Naive thymus-derived CD4-positive, alpha-beta T cell (primary cell): ENCODE measurements at regions of chr3 and their contacts with region 1.

Region 1: GRCh38 chr3:18444595-18445400 is 19.7 kb upstream of the SATB1 start:
- DNase-seq: peak; percentile 80 to 91 (median 87)
- ATAC-seq: peak; percentile 80
- H3K4me3 ChIP-seq: peak overlapping the region; percentile 99
- H3K4me3 Mint-ChIP-seq: peak overlapping the region; percentile 92 to 100 (median 96)
- H3K27ac ChIP-seq: peak overlapping the region; percentile 97
- H3K27ac Mint-ChIP-seq: peak overlapping the region; percentile 94 to 99 (median 98)
- H3K4me1 ChIP-seq: peaks cover 11 to 19% of the 10 kb centered on the region in 2 donors
- H3K4me1 Mint-ChIP-seq: peaks cover 19 to 52% (median 39%) of the 10 kb centered on the region in 7 donors
- H3K27me3 ChIP-seq: no peaks in the 10 kb centered on the region
- H3K27me3 Mint-ChIP-seq: no peaks in the 10 kb centered on the region

Region 2: GRCh38 chr3:17742108-17742879 is 702.5 kb before region 1 on chr3 and contains the start of gene TBC1D5:
- CTCF ChIA-PET with region 1: no interaction called
- POLR2A ChIA-PET with region 1: no interaction called
- intact Hi-C with region 1: loop called in 1 of 2 experiments (anchors 1 kb)
- DNase-seq: peak; percentile 77 to 91 (median 84)
- ATAC-seq: peak; percentile 95
- H3K4me3 ChIP-seq: peak within 1 kb of the TSS; percentile 72
- H3K4me3 Mint-ChIP-seq: peak within 1 kb of the TSS; percentile 79 to 96 (median 92)
- H3K27ac ChIP-seq: peak within 1 kb of the TSS; percentile 71
- H3K27ac Mint-ChIP-seq: peak within 1 kb of the TSS; percentile 74 to 96 (median 88)
- H3K4me1 ChIP-seq: peaks cover 6 to 8% of the 10 kb centered on the region in 2 donors
- H3K4me1 Mint-ChIP-seq: peaks cover 17 to 49% (median 39%) of the 10 kb centered on the region in 7 donors
- H3K27me3 ChIP-seq: no peaks in the 10 kb centered on the region
- H3K27me3 Mint-ChIP-seq: no peaks in the 10 kb centered on the region
- total RNA-seq, gene TBC1D5: 30.5 to 54.0 (median 40.3) TPM

Region 3: GRCh38 chr3:18401300-18401961 is 43.4 kb before region 1 on chr3:
- CTCF ChIA-PET with region 1: interaction called, 4 read pairs
- POLR2A ChIA-PET with region 1: interaction called, 13 read pairs
- intact Hi-C with region 1: loop called in 1 of 2 experiments (anchors 5 kb)
- DNase-seq: no peak
- ATAC-seq: peak; percentile 53
- H3K4me3 ChIP-seq: peak overlapping the region; percentile 3
- H3K4me3 Mint-ChIP-seq: peak overlapping the region; percentile 35 to 85 (median 80)
- H3K27ac ChIP-seq: peak overlapping the region; percentile 64
- H3K27ac Mint-ChIP-seq: peak overlapping the region; percentile 78 to 96 (median 87)
- H3K4me1 ChIP-seq: peaks cover 0 to 92% of the 10 kb centered on the region in 2 donors
- H3K4me1 Mint-ChIP-seq: peaks cover 51 to 100% (median 100%) of the 10 kb centered on the region in 7 donors
- H3K27me3 ChIP-seq: no peaks in the 10 kb centered on the region
- H3K27me3 Mint-ChIP-seq: no peaks in the 10 kb centered on the region

Region 4: DNA sequence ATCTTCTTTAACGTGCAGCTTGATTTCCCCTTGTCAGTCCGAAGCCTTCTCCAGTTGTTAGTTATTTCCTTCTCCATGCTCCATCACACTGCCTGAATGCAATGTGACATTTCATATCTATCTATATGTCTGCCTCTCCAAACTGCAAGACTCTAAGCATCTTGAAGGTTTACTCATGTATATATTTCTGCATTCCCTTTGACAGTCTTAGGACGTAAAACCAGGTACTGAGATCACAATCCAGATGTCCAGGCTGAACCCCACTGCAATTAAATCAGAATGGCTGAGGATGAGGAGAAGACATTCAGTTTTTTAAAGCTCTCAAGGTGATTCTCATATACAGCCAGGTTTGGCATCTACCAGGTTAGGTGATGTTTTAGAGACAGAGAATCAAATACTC is 13.5 kb before region 1 on chr3:
- CTCF ChIA-PET with region 1: interaction called, 11 read pairs
- POLR2A ChIA-PET with region 1: interaction called, 91 read pairs
- intact Hi-C with region 1: loop called (anchors 1 kb)
- DNase-seq: no peak
- ATAC-seq: no peak
- H3K4me3 ChIP-seq: peak overlapping the region; percentile 40
- H3K4me3 Mint-ChIP-seq: peak overlapping the region; percentile 78 to 100 (median 89)
- H3K27ac ChIP-seq: peak overlapping the region; percentile 97
- H3K27ac Mint-ChIP-seq: peak overlapping the region; percentile 87 to 97 (median 91)
- H3K4me1 ChIP-seq: peaks cover 0 to 43% of the 10 kb centered on the region in 2 donors
- H3K4me1 Mint-ChIP-seq: peaks cover 34 to 85% (median 75%) of the 10 kb centered on the region in 7 donors
- H3K27me3 ChIP-seq: no peaks in the 10 kb centered on the region
- H3K27me3 Mint-ChIP-seq: no peaks in the 10 kb centered on the region

Region 5: DNA sequence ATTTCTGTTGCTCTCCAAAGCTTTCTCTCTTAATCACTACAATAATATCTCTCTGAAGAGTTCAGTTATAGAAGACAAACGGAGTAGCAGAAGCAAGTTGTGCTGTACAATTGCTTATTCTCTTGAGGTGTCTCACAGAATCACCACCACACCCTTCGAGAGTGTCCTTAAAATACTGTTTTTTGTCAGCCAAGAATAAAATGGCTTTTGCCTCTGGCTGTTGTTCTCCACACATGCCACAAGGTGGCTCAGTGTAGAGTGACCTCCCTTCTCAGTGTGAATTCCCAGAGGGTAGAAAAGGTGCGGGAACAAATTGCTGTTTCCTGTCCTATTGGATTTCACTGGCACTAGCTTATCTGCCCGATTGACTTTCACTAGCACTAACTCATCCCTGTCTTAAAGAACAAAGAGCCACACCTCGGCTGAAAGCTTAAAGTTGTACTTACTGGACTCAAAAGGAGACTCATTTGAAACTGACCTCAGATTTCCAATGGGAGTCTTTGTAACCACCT is 114.6 kb after region 1 on chr3:
- CTCF ChIA-PET with region 1: interaction called, 4 read pairs
- POLR2A ChIA-PET with region 1: no interaction called
- intact Hi-C with region 1: loop called (anchors 1 to 2 kb)
- DNase-seq: peak; percentile 9 to 57 (median 32)
- ATAC-seq: peak; percentile 77
- H3K4me3 ChIP-seq: no peak overlapping the region
- H3K4me3 Mint-ChIP-seq: peak overlapping the region; percentile 40 to 79 (median 67)
- H3K27ac ChIP-seq: no peak overlapping the region
- H3K27ac Mint-ChIP-seq: peak overlapping the region; percentile 63 to 89 (median 79)
- H3K4me1 ChIP-seq: peaks cover 13 to 19% of the 10 kb centered on the region in 2 donors
- H3K4me1 Mint-ChIP-seq: peaks cover 22 to 67% (median 61%) of the 10 kb centered on the region in 7 donors
- H3K27me3 ChIP-seq: no peaks in the 10 kb centered on the region
- H3K27me3 Mint-ChIP-seq: no peaks in the 10 kb centered on the region

Region 6: GRCh38 chr3:18586076-18586475 is 141.3 kb after region 1 on chr3:
- CTCF ChIA-PET with region 1: no interaction called
- POLR2A ChIA-PET with region 1: no interaction called
- intact Hi-C with region 1: no loop called
- DNase-seq: no peak
- ATAC-seq: no peak
- H3K4me3 ChIP-seq: no peak overlapping the region
- H3K4me3 Mint-ChIP-seq: no peak overlapping the region
- H3K27ac ChIP-seq: no peak overlapping the region
- H3K27ac Mint-ChIP-seq: no peak overlapping the region
- H3K4me1 ChIP-seq: no peaks in the 10 kb centered on the region
- H3K4me1 Mint-ChIP-seq: peaks cover 4 to 19% (median 9%) of the 10 kb centered on the region in 7 donors
- H3K27me3 ChIP-seq: no peaks in the 10 kb centered on the region
- H3K27me3 Mint-ChIP-seq: no peaks in the 10 kb centered on the region

Region 7: GRCh38 chr3:18717598-18717997 is 272.8 kb after region 1 on chr3:
- CTCF ChIA-PET with region 1: interaction called, 3 read pairs
- POLR2A ChIA-PET with region 1: no interaction called
- intact Hi-C with region 1: loop called in 1 of 2 experiments (anchors 1 kb)
- DNase-seq: peak in 1 of 9 donors; percentile 14
- ATAC-seq: no peak
- H3K4me3 ChIP-seq: no peak overlapping the region
- H3K4me3 Mint-ChIP-seq: peak overlapping the region in 8 of 10 donors; percentile 28 to 78 (median 60)
- H3K27ac ChIP-seq: no peak overlapping the region
- H3K27ac Mint-ChIP-seq: peak overlapping the region; percentile 20 to 95 (median 77)
- H3K4me1 ChIP-seq: peaks cover 43 to 50% of the 10 kb centered on the region in 2 donors
- H3K4me1 Mint-ChIP-seq: peaks cover 50 to 85% (median 71%) of the 10 kb centered on the region in 7 donors
- H3K27me3 ChIP-seq: no peaks in the 10 kb centered on the region
- H3K27me3 Mint-ChIP-seq: no peaks in the 10 kb centered on the region

Region 8: DNA sequence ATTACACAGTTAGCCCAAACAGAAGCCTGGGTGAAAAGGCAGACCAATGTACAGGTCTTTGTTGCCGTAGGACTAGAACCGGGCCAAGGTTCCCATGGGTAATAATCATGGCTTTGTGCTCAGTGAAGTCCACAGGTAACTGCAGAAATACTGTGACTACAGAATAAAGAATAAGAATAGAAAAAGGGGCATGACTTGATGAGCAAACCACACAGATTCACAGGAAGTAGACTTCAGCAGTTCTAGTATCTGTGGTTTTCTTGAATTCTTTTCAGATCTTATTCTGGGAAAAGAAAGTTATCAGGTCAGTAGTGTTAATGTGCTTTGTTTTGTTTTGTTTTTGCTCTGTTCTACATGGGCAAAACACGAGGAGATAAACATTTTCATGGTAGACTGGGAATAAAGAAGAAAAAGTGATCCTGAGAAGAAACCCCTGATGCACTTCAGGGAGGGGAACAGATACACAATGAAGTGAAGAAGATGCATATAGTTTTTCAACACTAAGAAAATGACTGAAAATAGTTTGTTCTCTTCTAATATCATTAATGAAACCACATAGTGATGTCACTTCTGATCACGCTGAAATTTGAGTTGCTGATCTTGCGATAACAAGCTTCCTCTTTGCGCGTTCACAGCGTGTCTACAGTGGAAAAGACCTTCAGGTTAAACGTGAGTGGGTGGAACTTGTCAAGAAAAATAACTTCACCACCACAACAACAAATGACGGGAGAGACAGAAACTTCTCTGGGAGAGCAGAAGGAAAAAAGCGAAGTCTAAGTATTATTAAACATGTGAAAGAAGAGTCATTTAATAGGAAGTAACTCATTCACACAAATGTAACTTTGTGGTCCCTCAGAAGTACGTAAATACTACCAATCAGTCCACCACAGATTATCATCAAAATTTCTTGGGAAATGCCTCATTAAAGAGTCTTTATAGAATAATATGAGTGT is 296.1 kb after region 1 on chr3:
- CTCF ChIA-PET with region 1: no interaction called
- POLR2A ChIA-PET with region 1: interaction called, 3 read pairs
- intact Hi-C with region 1: loop called (anchors 1 to 5 kb)
- DNase-seq: peak in 8 of 9 donors; percentile 46 to 83 (median 70)
- ATAC-seq: peak; percentile 74
- H3K4me3 ChIP-seq: peak overlapping the region; percentile 28
- H3K4me3 Mint-ChIP-seq: peak overlapping the region; percentile 74 to 89 (median 84)
- H3K27ac ChIP-seq: peak overlapping the region; percentile 80
- H3K27ac Mint-ChIP-seq: peak overlapping the region; percentile 89 to 99 (median 96)
- H3K4me1 ChIP-seq: peaks cover 65 to 71% of the 10 kb centered on the region in 2 donors
- H3K4me1 Mint-ChIP-seq: peaks cover 52 to 97% (median 92%) of the 10 kb centered on the region in 7 donors
- H3K27me3 ChIP-seq: no peaks in the 10 kb centered on the region
- H3K27me3 Mint-ChIP-seq: no peaks in the 10 kb centered on the region